CD4-positive, alpha-beta memory T cell (primary cell): ENCODE measurements at regions of chr5 and their contacts with region 1.

Region 1: DNA sequence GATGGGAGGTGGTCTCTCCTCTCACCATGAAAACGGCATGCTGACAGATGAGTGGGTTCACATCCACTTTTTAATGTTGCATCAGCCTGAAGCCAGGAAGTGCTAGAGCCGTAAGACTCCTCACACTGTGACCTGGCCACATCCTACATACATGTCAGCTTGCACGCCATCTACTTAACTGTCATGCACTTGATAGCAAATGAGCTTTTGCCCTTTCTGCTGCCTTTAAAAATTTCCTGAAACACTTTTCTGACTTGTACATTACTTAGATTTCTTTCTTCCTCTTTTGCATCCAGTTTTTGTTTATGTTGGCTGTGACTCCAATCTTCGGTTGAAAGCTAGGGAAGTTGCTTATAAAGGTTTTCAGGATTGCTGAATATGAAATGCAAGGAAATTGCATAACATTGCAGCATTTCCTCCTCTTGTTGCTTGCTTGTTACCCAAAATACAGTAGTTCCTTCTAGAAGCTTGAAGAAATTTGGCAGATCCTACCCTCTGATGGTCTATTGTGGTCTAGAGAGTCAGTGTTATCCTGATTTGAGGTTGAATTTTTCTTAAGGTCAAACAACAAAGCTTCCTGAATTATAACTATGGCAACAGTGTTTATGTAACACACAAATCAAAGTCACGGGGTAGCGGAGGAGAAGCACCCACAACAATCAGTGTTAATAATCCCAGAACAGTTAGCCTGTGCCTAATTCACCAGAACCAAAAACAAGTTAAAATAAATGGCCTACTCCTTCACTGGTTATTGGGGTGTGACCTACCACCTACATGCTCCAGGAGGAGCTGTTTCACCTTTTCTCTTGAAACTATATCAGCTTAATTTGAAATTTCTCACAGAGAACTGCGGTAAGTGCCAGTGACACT is 232.5 kb downstream of the ARHGAP26 start:
- DNase-seq: peak; percentile 72 to 88 (median 75)
- H3K4me3 ChIP-seq: no peak overlapping the region
- H3K4me3 Mint-ChIP-seq: peak overlapping the region; percentile 40 to 79 (median 61)
- H3K27ac ChIP-seq: peak overlapping the region; percentile 77
- H3K27ac Mint-ChIP-seq: peak overlapping the region; percentile 87 to 98 (median 96)
- H3K4me1 ChIP-seq: peaks cover 54% of the 10 kb centered on the region
- H3K4me1 Mint-ChIP-seq: peaks cover 46 to 76% (median 57%) of the 10 kb centered on the region in 4 donors
- H3K27me3 ChIP-seq: no peaks in the 10 kb centered on the region
- H3K27me3 Mint-ChIP-seq: no peaks in the 10 kb centered on the region

Region 2: DNA sequence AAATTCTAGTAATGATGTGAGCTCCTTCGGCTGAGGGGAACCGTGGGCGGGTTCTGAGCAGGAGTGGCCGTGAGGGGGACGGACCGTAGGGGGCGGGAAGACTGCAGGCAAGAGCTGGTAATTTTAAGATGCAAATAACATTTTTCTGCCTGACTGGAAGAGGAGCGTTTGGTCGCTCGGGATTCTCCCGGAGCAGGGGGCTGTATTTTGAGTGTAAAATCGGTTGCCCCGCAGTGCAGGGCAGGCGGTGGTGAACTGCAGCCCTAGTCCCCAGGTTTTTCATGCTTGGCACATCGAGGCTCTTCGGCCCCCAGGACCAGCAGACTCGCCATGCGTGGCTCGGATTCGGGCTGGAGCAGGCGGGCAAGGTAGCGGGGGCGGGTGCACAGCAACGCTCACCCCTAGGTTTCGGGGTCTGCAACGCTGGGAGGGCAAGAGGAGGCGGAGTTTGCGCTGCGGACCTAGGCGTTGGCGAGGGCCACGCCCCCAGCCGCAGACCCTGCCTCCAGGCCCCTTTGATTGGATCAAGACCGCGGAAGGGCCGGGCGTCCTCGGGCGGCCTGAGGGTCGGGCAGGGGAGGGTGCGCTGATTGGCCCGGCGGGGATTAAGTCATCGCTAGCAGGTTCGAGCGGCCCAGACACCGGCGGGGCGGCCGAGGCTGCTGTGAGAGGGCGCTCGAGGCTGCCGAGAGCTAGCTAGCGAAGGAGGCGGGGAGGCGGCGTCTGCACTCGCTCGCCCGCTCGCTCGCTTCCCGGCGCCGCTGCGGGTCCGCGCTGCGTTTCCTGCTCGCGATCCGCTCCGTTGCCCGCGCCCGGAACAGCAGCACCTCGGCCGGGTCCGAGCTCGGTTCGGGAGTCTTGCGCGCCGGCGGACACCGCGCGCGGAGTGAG is 232.7 kb before region 1 on chr5 and contains the start of gene ARHGAP26:
- CTCF ChIA-PET with region 1: no interaction called
- POLR2A ChIA-PET with region 1: interaction called, 8 read pairs
- intact Hi-C with region 1: loop called (anchors 10 kb)
- DNase-seq: peak; percentile 87 to 91 (median 88)
- H3K4me3 ChIP-seq: peak within 1 kb of the TSS; percentile 74 to 89
- H3K4me3 Mint-ChIP-seq: peak within 1 kb of the TSS; percentile 94 to 98 (median 96)
- H3K27ac ChIP-seq: peak within 1 kb of the TSS; percentile 53
- H3K27ac Mint-ChIP-seq: peak within 1 kb of the TSS; percentile 85 to 97 (median 94)
- H3K4me1 ChIP-seq: peaks cover 14% of the 10 kb centered on the region
- H3K4me1 Mint-ChIP-seq: peaks cover 18 to 38% (median 26%) of the 10 kb centered on the region in 4 donors
- H3K27me3 ChIP-seq: no peaks in the 10 kb centered on the region
- H3K27me3 Mint-ChIP-seq: no peaks in the 10 kb centered on the region
- total RNA-seq, gene ARHGAP26: 22.6 to 22.7 TPM

Region 3: DNA sequence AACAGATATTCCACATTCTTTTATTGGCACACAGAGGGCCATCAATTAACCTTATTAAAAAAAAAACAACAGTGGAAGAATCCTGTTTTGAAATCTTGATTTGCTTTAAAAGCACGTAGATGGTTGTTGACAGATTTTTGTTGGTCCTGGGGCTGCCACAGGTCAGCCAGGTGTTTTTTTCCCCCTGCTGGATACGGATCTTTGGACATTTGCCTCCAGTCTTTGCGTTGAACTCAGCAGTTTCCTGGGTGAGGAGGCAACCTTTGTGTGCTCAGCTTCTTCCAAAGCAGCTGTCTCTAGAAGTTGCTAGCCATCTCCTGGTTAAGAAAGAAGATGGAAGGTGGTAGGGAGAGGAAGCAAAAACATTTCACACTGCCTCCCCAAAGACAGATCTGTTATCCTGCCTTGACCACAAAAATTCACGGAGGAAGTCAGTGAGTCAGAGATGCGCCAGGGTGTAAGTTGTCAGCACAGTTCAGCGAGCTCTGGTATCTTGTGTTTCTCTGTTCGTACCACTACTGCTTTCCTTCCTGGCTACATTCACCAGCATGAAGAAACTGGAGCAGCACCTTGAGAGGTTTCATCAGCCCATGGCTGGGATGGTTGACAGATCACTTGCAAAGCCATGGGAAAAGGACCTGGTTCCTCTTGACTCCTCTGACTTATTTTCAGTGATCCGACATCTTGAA is 25.2 kb before region 1 on chr5:
- CTCF ChIA-PET with region 1: interaction called, 15 read pairs
- POLR2A ChIA-PET with region 1: interaction called, 112 read pairs
- intact Hi-C with region 1: loop called (anchors 2 kb)
- DNase-seq: peak; percentile 56 to 82 (median 60)
- H3K4me3 ChIP-seq: no peak overlapping the region
- H3K4me3 Mint-ChIP-seq: peak overlapping the region in 7 of 8 donors; percentile 33 to 80 (median 73)
- H3K27ac ChIP-seq: peak overlapping the region; percentile 42
- H3K27ac Mint-ChIP-seq: peak overlapping the region; percentile 81 to 97 (median 93)
- H3K4me1 ChIP-seq: peaks cover 69% of the 10 kb centered on the region
- H3K4me1 Mint-ChIP-seq: peaks cover 38 to 93% (median 58%) of the 10 kb centered on the region in 4 donors
- H3K27me3 ChIP-seq: no peaks in the 10 kb centered on the region
- H3K27me3 Mint-ChIP-seq: no peaks in the 10 kb centered on the region

Region 4: DNA sequence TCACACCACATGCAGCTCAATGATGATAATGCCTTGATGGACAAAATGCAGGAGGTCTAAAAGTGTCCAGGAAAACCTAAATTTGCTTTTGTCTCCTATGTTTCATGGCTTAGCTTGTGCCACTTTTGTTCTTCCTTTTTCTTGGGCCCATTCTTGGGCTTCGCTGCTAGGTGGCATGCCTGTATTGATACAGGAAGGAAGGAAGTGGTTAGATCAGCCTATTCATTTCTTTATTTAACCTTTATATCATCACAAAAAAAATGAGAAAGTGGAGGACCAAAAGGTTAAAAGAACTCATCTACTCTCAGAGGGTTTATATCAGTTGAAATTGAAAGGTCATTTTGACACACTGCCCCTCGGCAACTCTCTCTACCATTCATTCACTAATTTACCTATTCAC is 27.7 kb after region 1 on chr5:
- CTCF ChIA-PET with region 1: interaction called, 6 read pairs
- POLR2A ChIA-PET with region 1: interaction called, 11 read pairs
- intact Hi-C with region 1: no loop called
- DNase-seq: peak in 4 of 5 donors; percentile 31 to 46 (median 42)
- H3K4me3 ChIP-seq: no peak overlapping the region
- H3K4me3 Mint-ChIP-seq: peak overlapping the region in 7 of 8 donors; percentile 33 to 64 (median 50)
- H3K27ac ChIP-seq: no peak overlapping the region
- H3K27ac Mint-ChIP-seq: peak overlapping the region; percentile 5 to 81 (median 58)
- H3K4me1 ChIP-seq: peaks cover 23% of the 10 kb centered on the region
- H3K4me1 Mint-ChIP-seq: peaks cover 20 to 57% (median 27%) of the 10 kb centered on the region in 4 donors
- H3K27me3 ChIP-seq: no peaks in the 10 kb centered on the region
- H3K27me3 Mint-ChIP-seq: no peaks in the 10 kb centered on the region

Region 5: DNA sequence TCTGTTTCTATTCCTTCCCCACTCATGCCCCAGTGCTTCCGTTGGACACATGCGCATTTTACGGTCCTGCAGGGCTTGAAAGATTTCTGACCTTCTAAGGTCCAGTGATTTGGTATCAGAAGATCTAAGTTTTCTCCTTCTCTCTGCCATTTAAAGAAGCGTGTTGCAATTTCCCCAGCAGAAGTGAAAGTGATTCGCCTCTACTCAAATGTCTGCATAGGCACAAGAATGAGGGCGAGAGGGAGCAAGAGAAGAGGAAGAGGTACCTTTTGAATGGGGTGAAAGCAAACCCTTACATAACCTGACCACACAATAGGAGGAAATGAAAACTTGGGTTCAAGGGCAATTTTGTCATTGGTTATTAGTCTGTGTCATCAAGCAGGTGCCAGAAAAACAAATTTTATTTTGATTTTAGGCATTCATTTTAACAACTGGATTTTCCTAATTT is 432.5 kb after region 1 on chr5:
- CTCF ChIA-PET with region 1: interaction called, 8 read pairs
- POLR2A ChIA-PET with region 1: interaction called, 34 read pairs
- intact Hi-C with region 1: no loop called
- DNase-seq: peak; percentile 61 to 72 (median 67)
- H3K4me3 ChIP-seq: peak overlapping the region; percentile 32 to 54
- H3K4me3 Mint-ChIP-seq: peak overlapping the region; percentile 93 to 98 (median 94)
- H3K27ac ChIP-seq: peak overlapping the region; percentile 55
- H3K27ac Mint-ChIP-seq: peak overlapping the region; percentile 92 to 100 (median 99)
- H3K4me1 ChIP-seq: peaks cover 51% of the 10 kb centered on the region
- H3K4me1 Mint-ChIP-seq: peaks cover 53 to 73% (median 65%) of the 10 kb centered on the region in 4 donors
- H3K27me3 ChIP-seq: no peaks in the 10 kb centered on the region
- H3K27me3 Mint-ChIP-seq: no peaks in the 10 kb centered on the region

Region 6: GRCh38 chr5:144170276-144171024 is 1167.8 kb after region 1 on chr5 and contains the starts of genes KCTD16 and YIPF5:
- CTCF ChIA-PET with region 1: interaction called, 3 read pairs
- POLR2A ChIA-PET with region 1: interaction called, 4 read pairs
- intact Hi-C with region 1: loop called (anchors 5 kb)
- DNase-seq: peak; percentile 96 to 99 (median 98)
- H3K4me3 ChIP-seq: peak within 1 kb of the TSS; percentile 66 to 97
- H3K4me3 Mint-ChIP-seq: peak within 1 kb of the TSS; percentile 84 to 98 (median 93)
- H3K27ac ChIP-seq: peak within 1 kb of the TSS; percentile 92
- H3K27ac Mint-ChIP-seq: peak within 1 kb of the TSS; percentile 90 to 99 (median 94)
- H3K4me1 ChIP-seq: peaks cover 44% of the 10 kb centered on the region
- H3K4me1 Mint-ChIP-seq: peaks cover 27 to 50% (median 45%) of the 10 kb centered on the region in 4 donors
- H3K27me3 ChIP-seq: no peaks in the 10 kb centered on the region
- H3K27me3 Mint-ChIP-seq: no peaks in the 10 kb centered on the region
- total RNA-seq, gene KCTD16: 0.14 to 0.20 TPM
- total RNA-seq, gene YIPF5: 50.5 to 56.3 TPM